H1 (cell line): ENCODE measurements at regions of chr17 and their contacts with region 1.

Region 1: GRCh38 chr17:48259694-48260291 is 152.2 kb downstream of the SNX11 start:
- DNase-seq: no peak
- H3K4me3 ChIP-seq: no peak overlapping the region
- H3K27ac ChIP-seq: no peak overlapping the region
- H3K4me1 ChIP-seq: peaks cover 0 to 6% (median 0%) of the 10 kb centered on the region in 4 experiments; a peak in 1 of 7 replicates
- H3K27me3 ChIP-seq: no peaks in the 10 kb centered on the region
- CTCF ChIP-seq: peak in 2 of 3 experiments; percentile 69 to 70; a peak in 3 of 4 replicates
- EP300 ChIP-seq: no peak
- POLR2A ChIP-seq: no peak
- RAD21 ChIP-seq: peak; percentile 70 to 74

Region 2: GRCh38 chr17:48181653-48182052 is 78.1 kb before region 1 on chr17:
- CTCF ChIA-PET with region 1: interaction called, 11 read pairs
- POLR2A ChIA-PET with region 1: no interaction called
- DNase-seq: no peak
- H3K4me3 ChIP-seq: no peak overlapping the region
- H3K27ac ChIP-seq: no peak overlapping the region
- H3K4me1 ChIP-seq: peaks cover 0 to 9% (median 3%) of the 10 kb centered on the region in 4 experiments; a peak in 3 of 7 replicates
- H3K27me3 ChIP-seq: no peaks in the 10 kb centered on the region
- CTCF ChIP-seq: peak; percentile 37 to 81 (median 76)
- EP300 ChIP-seq: no peak
- POLR2A ChIP-seq: no peak
- RAD21 ChIP-seq: peak; percentile 84 to 85

Region 3: DNA sequence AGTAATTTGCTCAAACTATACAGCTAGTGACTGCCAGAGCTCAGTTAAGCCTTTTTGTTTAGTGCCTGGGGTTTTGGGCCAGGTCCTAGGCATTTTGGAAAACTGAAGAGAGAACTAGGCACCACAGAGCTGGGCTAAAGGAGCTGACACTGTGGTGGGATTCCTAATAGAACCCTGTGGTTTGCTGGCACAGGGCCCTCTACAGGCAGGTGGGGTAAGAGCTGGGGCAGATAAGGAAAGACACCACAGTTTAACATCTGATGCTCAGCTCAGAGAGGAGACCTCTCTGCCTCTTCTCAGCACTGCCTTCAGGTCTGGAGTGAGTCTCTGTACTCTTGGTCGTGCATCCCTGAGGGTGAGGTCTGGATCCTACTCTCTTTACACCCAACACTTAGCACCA is 31.1 kb before region 1 on chr17:
- CTCF ChIA-PET with region 1: interaction called, 42 read pairs
- POLR2A ChIA-PET with region 1: no interaction called
- DNase-seq: peak; percentile 9 to 60
- H3K4me3 ChIP-seq: no peak overlapping the region
- H3K27ac ChIP-seq: no peak overlapping the region
- H3K4me1 ChIP-seq: peaks cover 0 to 7% (median 3%) of the 10 kb centered on the region in 4 experiments; a peak in 3 of 7 replicates
- H3K27me3 ChIP-seq: peaks cover 0 to 2% (median 0%) of the 10 kb centered on the region in 4 experiments; a peak in 1 of 7 replicates
- CTCF ChIP-seq: peak; percentile 73 to 90 (median 75)
- EP300 ChIP-seq: no peak
- POLR2A ChIP-seq: no peak
- RAD21 ChIP-seq: peak; percentile 30 to 54; a peak in 3 of 4 replicates

Region 4: DNA sequence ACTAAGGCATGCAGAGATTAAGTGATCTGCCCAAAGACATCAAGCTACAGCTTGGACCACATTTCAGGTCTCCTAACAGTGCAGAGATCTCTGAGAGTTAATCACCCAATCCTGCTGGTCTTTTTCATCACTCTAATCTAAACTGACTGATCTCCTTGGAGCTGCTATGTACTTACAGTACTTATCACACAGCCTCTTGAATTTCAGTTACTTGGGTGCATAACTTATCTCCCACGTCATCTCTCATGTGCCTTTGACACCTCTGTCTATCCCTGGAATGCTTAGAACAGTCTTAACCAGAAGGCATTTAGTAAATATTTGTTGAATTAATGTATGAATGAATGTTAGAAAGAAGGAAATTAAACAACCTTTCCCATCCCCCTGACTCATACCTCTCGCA is 13.2 kb before region 1 on chr17:
- CTCF ChIA-PET with region 1: interaction called, 45 read pairs
- POLR2A ChIA-PET with region 1: interaction called, 4 read pairs
- DNase-seq: no peak
- H3K4me3 ChIP-seq: no peak overlapping the region
- H3K27ac ChIP-seq: no peak overlapping the region
- H3K4me1 ChIP-seq: peaks cover 0 to 8% (median 2%) of the 10 kb centered on the region in 4 experiments; a peak in 2 of 7 replicates
- H3K27me3 ChIP-seq: no peaks in the 10 kb centered on the region
- CTCF ChIP-seq: no peak
- EP300 ChIP-seq: no peak
- POLR2A ChIP-seq: no peak
- RAD21 ChIP-seq: no peak

Region 5: GRCh38 chr17:48283411-48283810 is 23.6 kb after region 1 on chr17:
- CTCF ChIA-PET with region 1: interaction called, 21 read pairs
- POLR2A ChIA-PET with region 1: no interaction called
- DNase-seq: no peak
- H3K4me3 ChIP-seq: no peak overlapping the region
- H3K27ac ChIP-seq: no peak overlapping the region
- H3K4me1 ChIP-seq: no peaks in the 10 kb centered on the region
- H3K27me3 ChIP-seq: no peaks in the 10 kb centered on the region
- CTCF ChIP-seq: no peak
- EP300 ChIP-seq: no peak
- POLR2A ChIP-seq: no peak
- RAD21 ChIP-seq: no peak

Region 6: GRCh38 chr17:48351831-48352332 is 92.1 kb after region 1 on chr17:
- CTCF ChIA-PET with region 1: interaction called, 11 read pairs
- POLR2A ChIA-PET with region 1: no interaction called
- DNase-seq: no peak
- H3K4me3 ChIP-seq: no peak overlapping the region
- H3K27ac ChIP-seq: no peak overlapping the region
- H3K4me1 ChIP-seq: no peaks in the 10 kb centered on the region
- H3K27me3 ChIP-seq: no peaks in the 10 kb centered on the region; a peak in 1 of 7 replicates
- CTCF ChIP-seq: peak in 2 of 3 experiments; percentile 33; a peak in 2 of 4 replicates
- EP300 ChIP-seq: no peak
- POLR2A ChIP-seq: no peak
- RAD21 ChIP-seq: peak in 1 of 2 experiments; percentile 51